PC-3 (cell line): ENCODE measurements at regions of chr9 and their contacts with region 1.

Region 1: GRCh38 chr9:489198-490197 is 274.8 kb downstream of the DOCK8 start:
- DNase-seq: peak; percentile 79
- ATAC-seq: peak; percentile 77
- H3K4me3 ChIP-seq: peak overlapping the region; percentile 31; the same call in 1 of the 2 replicates
- H3K27ac ChIP-seq: peak overlapping the region; percentile 98
- H3K4me1 ChIP-seq: peaks cover 51% of the 10 kb centered on the region
- H3K27me3 ChIP-seq: no peaks in the 10 kb centered on the region
- CTCF ChIP-seq: no peak

Region 2: DNA sequence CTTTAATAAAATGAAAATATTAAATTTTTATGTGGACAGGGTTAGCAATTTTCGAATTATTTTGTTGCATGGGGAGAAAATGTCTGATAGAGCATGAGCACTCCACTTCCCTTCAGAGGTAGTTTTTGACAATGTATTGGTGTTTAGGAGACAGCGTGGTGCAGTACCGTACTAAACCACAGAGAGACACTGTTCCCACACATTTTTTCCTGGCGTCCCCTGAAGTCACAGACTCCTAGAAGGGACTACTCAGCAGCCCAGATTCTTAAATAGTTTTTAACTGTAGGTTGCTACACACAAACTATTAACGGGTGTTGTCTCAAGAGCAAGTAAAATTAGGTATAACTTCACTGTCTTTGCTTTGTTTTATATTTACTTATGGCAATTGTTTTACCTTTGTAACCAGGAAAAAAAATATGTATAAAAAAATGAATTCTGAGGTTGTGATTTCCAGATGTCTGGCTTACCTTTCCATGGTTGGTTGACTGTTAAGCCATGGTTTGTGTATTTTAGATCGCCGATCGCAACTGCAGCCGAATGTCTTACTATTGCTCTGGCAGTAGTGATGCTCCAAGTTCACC is 103.6 kb before region 1 on chr9:
- CTCF ChIA-PET with region 1: no interaction called
- POLR2A ChIA-PET with region 1: no interaction called
- intact Hi-C with region 1: loop called (anchors 5 kb)
- DNase-seq: peak; percentile 83
- ATAC-seq: peak; percentile 91
- H3K4me3 ChIP-seq: no peak overlapping the region
- H3K27ac ChIP-seq: no peak overlapping the region
- H3K4me1 ChIP-seq: no peaks in the 10 kb centered on the region
- H3K27me3 ChIP-seq: no peaks in the 10 kb centered on the region
- CTCF ChIP-seq: peak; percentile 86

Region 3: DNA sequence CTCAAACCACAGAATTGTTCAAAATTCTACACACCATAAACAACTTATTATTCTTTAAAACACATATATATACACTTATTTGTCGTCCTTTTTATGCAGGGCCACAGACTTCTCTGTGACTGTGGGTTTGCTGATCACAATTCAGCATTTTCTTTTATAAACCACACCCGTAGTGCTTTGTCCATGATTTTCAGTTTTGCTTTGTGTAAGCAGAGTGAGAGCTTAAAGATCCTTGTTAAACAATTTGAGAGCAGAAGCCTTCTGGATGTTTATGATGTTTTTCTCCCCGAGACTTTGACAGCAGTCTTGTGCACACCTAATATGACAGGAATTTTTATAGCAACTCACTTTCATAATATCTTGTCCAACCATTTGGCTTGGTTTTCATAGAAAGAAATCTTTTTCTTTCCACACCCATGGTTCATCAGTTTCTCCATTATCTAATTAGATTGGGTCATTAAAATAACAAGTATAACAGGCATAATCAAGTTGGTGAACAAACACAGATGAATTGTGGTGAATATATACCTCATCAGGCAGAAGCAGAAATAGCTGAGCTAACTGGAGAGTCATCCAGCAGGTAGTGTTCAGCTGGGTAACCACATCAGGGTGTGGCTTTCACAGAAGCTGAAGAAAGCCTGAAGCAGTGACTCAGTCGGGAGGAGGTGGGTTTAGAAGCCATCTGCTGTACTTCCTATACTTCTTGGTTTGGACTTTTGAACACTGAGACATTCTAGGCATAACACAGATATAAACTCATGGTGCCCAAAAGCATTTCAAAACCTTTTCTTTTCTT is 42.1 kb before region 1 on chr9:
- CTCF ChIA-PET with region 1: no interaction called
- POLR2A ChIA-PET with region 1: no interaction called
- intact Hi-C with region 1: loop called (anchors 1 kb)
- DNase-seq: peak; percentile 90
- ATAC-seq: peak; percentile 100
- H3K4me3 ChIP-seq: peak overlapping the region; percentile 44
- H3K27ac ChIP-seq: peak overlapping the region; percentile 62
- H3K4me1 ChIP-seq: peaks cover 16% of the 10 kb centered on the region
- H3K27me3 ChIP-seq: no peaks in the 10 kb centered on the region
- CTCF ChIP-seq: no peak

Region 4: DNA sequence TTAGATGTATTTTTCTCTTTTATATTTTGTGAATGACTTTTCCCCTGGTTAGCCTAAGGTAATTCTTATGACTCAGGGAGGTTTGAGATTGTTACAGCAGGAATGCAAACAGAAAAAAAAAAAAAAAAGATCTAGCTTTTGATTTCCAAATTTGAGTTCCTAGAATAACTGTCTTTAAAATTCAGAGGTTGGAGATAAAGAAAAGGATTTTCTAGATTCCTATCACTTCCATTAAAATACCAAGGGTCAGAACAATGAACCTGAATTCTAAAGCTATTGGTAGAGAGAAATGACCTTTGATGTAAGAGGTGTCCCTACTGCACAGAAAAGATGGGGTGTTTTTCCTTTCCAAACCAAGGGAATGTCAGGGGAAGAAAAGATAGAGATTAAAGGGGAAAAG is 12.3 kb before region 1 on chr9:
- CTCF ChIA-PET with region 1: no interaction called
- POLR2A ChIA-PET with region 1: no interaction called
- intact Hi-C with region 1: loop called (anchors 1 kb)
- DNase-seq: peak; percentile 45
- ATAC-seq: peak; percentile 37
- H3K4me3 ChIP-seq: peak overlapping the region; percentile 14; the same call in 1 of the 2 replicates
- H3K27ac ChIP-seq: peak overlapping the region; percentile 64
- H3K4me1 ChIP-seq: peaks cover 46% of the 10 kb centered on the region
- H3K27me3 ChIP-seq: no peaks in the 10 kb centered on the region
- CTCF ChIP-seq: no peak

Region 5: GRCh38 chr9:503881-504852 is 14.7 kb after region 1 on chr9:
- CTCF ChIA-PET with region 1: no interaction called
- POLR2A ChIA-PET with region 1: interaction called, 18 read pairs
- intact Hi-C with region 1: loop called (anchors 2 kb)
- DNase-seq: peak; percentile 76
- ATAC-seq: peak; percentile 86
- H3K4me3 ChIP-seq: peak within 1 kb of the TSS; percentile 89
- H3K27ac ChIP-seq: peak within 1 kb of the TSS; percentile 29; the same call in 1 of the 2 replicates
- H3K4me1 ChIP-seq: peaks cover 21% of the 10 kb centered on the region
- H3K27me3 ChIP-seq: no peaks in the 10 kb centered on the region
- CTCF ChIP-seq: peak; percentile 32; the same call in 1 of the 2 replicates